HEK293 (cell line): ENCODE measurements at regions of chr1 and their contacts with region 1.

Region 1: GRCh38 chr1:48061162-48062136 is 64.3 kb upstream of the TRABD2B start:
- H3K4me3 ChIP-seq: no peak overlapping the region
- H3K27ac ChIP-seq: no peak overlapping the region
- H3K4me1 ChIP-seq: no peaks in the 10 kb centered on the region
- CTCF ChIP-seq: no peak; the same call in 1 of the 2 replicates

Region 2: GRCh38 chr1:47934243-47934805 is 127.1 kb before region 1 on chr1:
- CTCF ChIA-PET with region 1: no interaction called
- POLR2A ChIA-PET with region 1: no interaction called
- H3K4me3 ChIP-seq: no peak overlapping the region
- H3K27ac ChIP-seq: no peak overlapping the region
- H3K4me1 ChIP-seq: no peaks in the 10 kb centered on the region
- CTCF ChIP-seq: no peak

Region 3: DNA sequence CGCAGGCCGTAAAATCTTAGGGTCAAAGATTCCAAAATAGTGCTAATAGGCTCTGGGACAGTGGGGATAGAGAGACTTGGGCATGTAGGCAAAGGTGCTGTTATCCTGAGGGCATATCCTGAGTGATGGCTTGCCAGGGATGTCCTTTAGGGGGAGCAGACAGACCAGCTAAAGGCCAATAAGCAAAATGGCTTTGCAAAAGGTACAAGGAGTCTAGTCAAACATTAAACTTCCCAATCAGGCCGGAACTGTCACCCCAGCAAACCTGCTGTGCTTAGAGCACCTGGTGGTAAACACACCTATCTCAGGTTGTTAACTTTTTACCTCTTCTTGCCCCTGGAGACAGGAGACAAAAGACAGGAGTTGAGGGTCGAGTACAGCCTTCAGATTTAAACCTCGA is 113.3 kb before region 1 on chr1:
- CTCF ChIA-PET with region 1: interaction called, 14 read pairs
- POLR2A ChIA-PET with region 1: no interaction called
- H3K4me3 ChIP-seq: no peak overlapping the region
- H3K27ac ChIP-seq: no peak overlapping the region
- H3K4me1 ChIP-seq: no peaks in the 10 kb centered on the region
- CTCF ChIP-seq: no peak

Region 4: DNA sequence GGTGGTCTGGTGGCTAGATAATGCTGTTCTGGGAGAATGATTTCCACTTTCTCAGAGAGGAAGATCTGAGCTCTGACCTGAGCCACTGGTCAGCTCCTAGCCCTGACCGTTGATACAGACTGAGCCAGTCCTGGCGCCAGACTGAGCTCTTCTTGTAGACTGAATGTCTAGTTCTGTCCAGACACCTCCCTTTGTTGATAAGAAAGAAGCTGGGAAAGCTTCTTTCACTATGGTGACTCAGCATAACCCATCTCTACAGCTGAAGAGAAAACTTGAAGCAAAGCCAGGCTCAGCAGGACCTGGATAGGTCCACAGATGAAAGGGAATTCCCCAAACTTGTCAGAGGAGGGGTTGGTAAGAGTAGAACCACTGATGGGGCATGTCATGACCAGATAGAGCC is 54.4 kb before region 1 on chr1:
- CTCF ChIA-PET with region 1: interaction called, 151 read pairs
- POLR2A ChIA-PET with region 1: no interaction called
- H3K4me3 ChIP-seq: no peak overlapping the region
- H3K27ac ChIP-seq: no peak overlapping the region
- H3K4me1 ChIP-seq: peaks cover 6% of the 10 kb centered on the region
- CTCF ChIP-seq: no peak

Region 5: GRCh38 chr1:48048064-48048463 is 13.4 kb before region 1 on chr1:
- CTCF ChIA-PET with region 1: interaction called, 73 read pairs
- POLR2A ChIA-PET with region 1: no interaction called
- H3K4me3 ChIP-seq: no peak overlapping the region
- H3K27ac ChIP-seq: no peak overlapping the region
- H3K4me1 ChIP-seq: peaks cover 15% of the 10 kb centered on the region
- CTCF ChIP-seq: no peak